IMR-90 (cell line): ENCODE measurements at regions of chr5 and their contacts with region 1.

Region 1: GRCh38 chr5:61263561-61264272 is 68.3 kb upstream of the ZSWIM6 start:
- DNase-seq: no peak
- ATAC-seq: no peak
- H3K4me3 ChIP-seq: no peak overlapping the region
- H3K27ac ChIP-seq: no peak overlapping the region
- H3K4me1 ChIP-seq: no peaks in the 10 kb centered on the region
- H3K27me3 ChIP-seq: no peaks in the 10 kb centered on the region
- CTCF ChIP-seq: no peak
- POLR2A ChIP-seq: no peak
- RAD21 ChIP-seq: no peak

Region 2: GRCh38 chr5:61228691-61229280 is 34.9 kb before region 1 on chr5:
- CTCF ChIA-PET with region 1: no interaction called
- POLR2A ChIA-PET with region 1: no interaction called
- dilution Hi-C with region 1: no loop called
- in situ Hi-C with region 1: no loop called
- intact Hi-C with region 1: no loop called
- DNase-seq: peak; percentile 52
- ATAC-seq: peak; percentile 45; the same call in 1 of the 2 replicates
- H3K4me3 ChIP-seq: no peak overlapping the region
- H3K27ac ChIP-seq: no peak overlapping the region
- H3K4me1 ChIP-seq: peaks cover 12% of the 10 kb centered on the region; the same call in 1 of the 2 replicates
- H3K27me3 ChIP-seq: no peaks in the 10 kb centered on the region
- CTCF ChIP-seq: no peak
- POLR2A ChIP-seq: no peak
- RAD21 ChIP-seq: no peak

Region 3: DNA sequence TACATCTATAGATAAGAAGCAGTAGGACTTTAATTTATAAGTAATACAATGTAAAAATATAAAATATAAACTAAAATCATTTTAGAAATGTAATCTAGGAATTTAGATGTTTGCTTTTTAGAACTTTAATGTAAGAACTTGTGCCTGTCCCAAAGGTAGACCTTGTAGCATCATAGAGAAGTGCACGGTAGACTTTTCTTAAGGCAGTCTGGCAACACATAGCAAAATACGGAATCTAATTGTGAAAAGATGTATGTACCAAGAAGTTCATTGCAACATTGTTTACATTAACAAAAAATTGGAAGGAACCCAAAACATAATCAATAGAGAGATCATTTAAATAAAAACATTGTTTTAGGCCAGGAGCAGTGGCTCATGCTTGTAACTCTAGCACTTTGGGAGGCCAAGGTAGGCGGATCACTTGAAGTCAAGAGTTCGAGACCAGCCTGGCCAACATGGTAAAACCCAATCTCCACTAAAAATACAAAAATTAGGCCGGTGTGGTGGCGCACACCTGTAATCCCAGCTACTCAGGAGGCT is 16.9 kb before region 1 on chr5:
- CTCF ChIA-PET with region 1: no interaction called
- POLR2A ChIA-PET with region 1: no interaction called
- dilution Hi-C with region 1: no loop called
- in situ Hi-C with region 1: no loop called
- intact Hi-C with region 1: loop called (anchors 1 kb)
- DNase-seq: no peak
- ATAC-seq: no peak
- H3K4me3 ChIP-seq: no peak overlapping the region
- H3K27ac ChIP-seq: no peak overlapping the region
- H3K4me1 ChIP-seq: 0 out of 2 replicates have a peak, but pooled peaks cover 3% of the 10 kb centered on the region
- H3K27me3 ChIP-seq: no peaks in the 10 kb centered on the region
- CTCF ChIP-seq: no peak
- POLR2A ChIP-seq: no peak
- RAD21 ChIP-seq: no peak